CD8-positive, alpha-beta T cell (primary cell): ENCODE measurements at regions of chr3 and their contacts with region 1.

Region 1: GRCh38 chr3:42804106-42804830 is at the start of gene HIGD1A:
- DNase-seq: peak; percentile 82 to 97 (median 92)
- ATAC-seq: peak; percentile 98
- H3K4me3 ChIP-seq: peak within 1 kb of the TSS; percentile 84 to 90
- H3K4me3 Mint-ChIP-seq: peak within 1 kb of the TSS; percentile 98
- H3K27ac ChIP-seq: peak within 1 kb of the TSS; percentile 68 to 87
- H3K27ac Mint-ChIP-seq: peak within 1 kb of the TSS; percentile 91
- H3K4me1 ChIP-seq: peaks cover 26% of the 10 kb centered on the region
- H3K4me1 Mint-ChIP-seq: peaks cover 49% of the 10 kb centered on the region
- H3K27me3 ChIP-seq: no peaks in the 10 kb centered on the region
- H3K27me3 Mint-ChIP-seq: peaks cover 4% of the 10 kb centered on the region
- CTCF ChIP-seq: no peak
- total RNA-seq, gene HIGD1A: 10.9 to 11.8 TPM

Region 2: DNA sequence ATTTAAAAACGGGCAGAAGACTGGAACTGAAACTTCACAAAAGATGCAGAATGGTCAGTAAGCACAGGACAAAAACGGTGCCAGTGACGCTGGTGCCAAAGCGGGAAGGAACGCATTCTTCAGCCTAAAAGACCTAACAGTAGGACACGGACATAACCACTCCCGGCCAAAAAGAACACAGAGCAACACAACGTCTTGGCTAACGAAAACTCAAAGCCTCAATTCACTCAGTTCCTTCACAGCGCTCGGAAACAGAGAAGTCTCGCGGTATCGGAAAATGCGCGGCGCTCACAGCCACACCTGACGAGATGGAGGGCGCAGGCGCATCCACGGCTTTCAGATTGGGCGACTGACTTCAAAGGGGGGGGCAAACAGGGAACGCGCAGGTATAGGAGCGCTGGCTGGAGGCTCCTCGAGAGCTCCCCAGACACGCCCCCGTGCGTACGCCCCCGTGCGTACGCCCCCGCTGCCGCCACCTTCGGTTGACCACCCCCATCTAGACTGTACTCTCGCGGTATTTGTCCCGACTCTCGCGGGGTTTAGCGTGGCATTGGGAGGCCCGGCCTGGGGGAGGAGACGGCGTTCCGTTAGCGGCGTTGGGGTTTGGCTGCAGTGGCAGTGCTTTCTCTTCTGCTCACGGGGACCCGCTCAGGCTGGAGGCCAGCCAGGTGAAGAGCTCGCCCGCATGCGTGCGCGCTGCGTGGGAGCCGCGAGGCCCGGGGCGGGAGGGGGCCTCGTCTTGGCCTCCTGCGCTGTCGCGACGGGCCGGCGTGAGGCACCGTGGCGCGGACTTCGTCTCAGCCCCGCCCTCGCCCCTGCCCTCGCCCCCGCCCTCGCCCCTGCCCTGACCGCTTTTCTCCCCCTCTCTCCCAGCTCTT is 203.9 kb before region 1 on chr3 and contains the start of gene NKTR:
- CTCF ChIA-PET with region 1: no interaction called
- POLR2A ChIA-PET with region 1: no interaction called
- intact Hi-C with region 1: loop called in 1 of 2 experiments (anchors 5 kb)
- DNase-seq: peak; percentile 99 to 100 (median 100)
- ATAC-seq: peak; percentile 94
- H3K4me3 ChIP-seq: peak within 1 kb of the TSS; percentile 56 to 96
- H3K4me3 Mint-ChIP-seq: peak within 1 kb of the TSS; percentile 93
- H3K27ac ChIP-seq: peak within 1 kb of the TSS; percentile 69 to 81
- H3K27ac Mint-ChIP-seq: peak within 1 kb of the TSS; percentile 97
- H3K4me1 ChIP-seq: peaks cover 22% of the 10 kb centered on the region
- H3K4me1 Mint-ChIP-seq: peaks cover 39% of the 10 kb centered on the region
- H3K27me3 ChIP-seq: no peaks in the 10 kb centered on the region
- H3K27me3 Mint-ChIP-seq: no peaks in the 10 kb centered on the region
- CTCF ChIP-seq: no peak
- total RNA-seq, gene NKTR: 190 to 204 TPM

Region 3: GRCh38 chr3:42732829-42733459 is 71.3 kb before region 1 on chr3:
- CTCF ChIA-PET with region 1: no interaction called
- POLR2A ChIA-PET with region 1: no interaction called
- intact Hi-C with region 1: no loop called
- DNase-seq: peak in 1 of 9 experiments; percentile 31
- ATAC-seq: no peak
- H3K4me3 ChIP-seq: no peak overlapping the region
- H3K4me3 Mint-ChIP-seq: no peak overlapping the region
- H3K27ac ChIP-seq: no peak overlapping the region
- H3K27ac Mint-ChIP-seq: no peak overlapping the region
- H3K4me1 ChIP-seq: no peaks in the 10 kb centered on the region
- H3K4me1 Mint-ChIP-seq: no peaks in the 10 kb centered on the region
- H3K27me3 ChIP-seq: no peaks in the 10 kb centered on the region
- H3K27me3 Mint-ChIP-seq: no peaks in the 10 kb centered on the region
- CTCF ChIP-seq: no peak

Region 4: DNA sequence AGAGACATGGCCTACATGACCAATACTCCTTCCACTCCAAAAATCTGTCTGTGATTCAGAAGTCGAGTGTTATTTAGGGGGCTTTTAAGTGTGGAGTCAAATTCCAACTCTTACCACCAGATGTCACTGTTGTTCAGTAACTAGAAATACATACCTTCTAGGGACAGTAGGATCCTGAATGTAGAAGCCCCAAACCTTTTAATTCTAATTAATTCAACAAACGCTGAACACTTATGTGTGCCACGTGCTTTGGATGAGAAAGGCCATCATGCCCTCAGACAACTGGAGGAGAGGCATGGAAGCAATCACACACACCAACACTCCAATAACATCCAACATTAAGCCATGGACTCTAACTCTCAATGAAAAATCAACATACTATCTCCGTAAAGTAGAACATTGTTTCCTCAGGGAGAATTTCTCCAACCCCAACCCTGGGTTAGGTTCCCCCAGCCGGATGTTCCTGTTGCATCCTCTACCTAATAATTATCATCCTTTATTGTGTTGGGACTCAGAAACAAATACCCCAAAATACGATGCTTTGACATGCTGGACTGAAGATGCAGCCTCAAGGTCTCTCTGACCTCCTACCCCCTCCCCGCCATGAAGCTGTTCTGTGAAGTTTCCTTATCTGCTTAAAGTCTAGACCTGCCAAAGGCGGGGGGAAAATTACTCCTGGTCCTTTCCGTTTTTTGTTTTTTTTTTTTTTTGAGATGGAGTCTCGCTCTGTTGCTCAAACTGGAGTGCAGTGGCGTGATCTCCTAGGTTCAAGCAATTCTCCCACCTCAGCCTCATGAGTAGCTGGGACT is 23.2 kb before region 1 on chr3:
- CTCF ChIA-PET with region 1: interaction called, 4 read pairs
- POLR2A ChIA-PET with region 1: no interaction called
- intact Hi-C with region 1: loop called in 1 of 2 experiments (anchors 1 kb)
- DNase-seq: peak in 3 of 9 experiments; percentile 55 to 84 (median 80)
- ATAC-seq: peak; percentile 92
- H3K4me3 ChIP-seq: no peak overlapping the region
- H3K4me3 Mint-ChIP-seq: no peak overlapping the region
- H3K27ac ChIP-seq: no peak overlapping the region
- H3K27ac Mint-ChIP-seq: no peak overlapping the region
- H3K4me1 ChIP-seq: no peaks in the 10 kb centered on the region
- H3K4me1 Mint-ChIP-seq: peaks cover 2% of the 10 kb centered on the region
- H3K27me3 ChIP-seq: no peaks in the 10 kb centered on the region
- H3K27me3 Mint-ChIP-seq: no peaks in the 10 kb centered on the region
- CTCF ChIP-seq: peak; percentile 80

Region 5: DNA sequence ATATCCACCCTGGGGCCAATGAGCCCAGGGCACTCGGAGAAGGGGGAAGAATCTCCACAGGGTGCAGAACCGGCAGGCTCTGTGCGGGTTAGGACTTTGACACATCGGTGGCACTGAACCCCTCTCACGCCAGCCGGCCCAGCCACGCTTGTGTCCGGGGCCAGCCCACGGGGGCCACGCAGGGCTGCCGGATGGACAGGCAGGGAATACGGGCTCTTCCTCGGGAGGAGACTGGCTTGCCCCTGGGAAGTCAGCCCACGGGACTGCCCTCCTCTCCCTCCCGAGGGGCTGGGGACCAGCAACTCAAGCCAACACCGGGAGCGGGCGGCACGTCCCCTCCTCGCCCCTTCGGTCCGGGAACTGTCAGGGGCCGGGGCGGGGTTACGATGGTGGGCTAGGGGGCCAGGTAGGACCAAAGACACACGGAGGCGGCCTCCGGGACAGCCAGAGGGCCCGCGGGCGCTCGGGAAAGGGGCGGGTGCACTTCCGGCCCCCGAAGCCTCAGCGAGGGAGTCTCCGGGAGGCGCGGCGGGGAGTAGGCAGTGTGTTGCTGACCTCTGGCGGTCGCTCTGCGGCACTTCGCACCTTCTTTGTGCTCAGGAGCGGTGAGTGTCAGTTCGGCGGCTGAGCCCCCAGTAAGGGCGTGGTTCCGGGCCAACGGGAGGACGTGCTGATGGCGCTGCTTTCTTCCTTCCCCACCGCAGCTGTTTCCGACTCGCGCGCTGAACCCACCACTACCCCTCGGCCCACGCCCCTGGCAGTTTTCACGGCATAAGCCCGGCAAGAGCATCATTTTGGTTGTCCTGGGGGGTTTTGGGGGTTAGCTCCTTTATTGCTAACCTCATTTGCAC is 76.6 kb after region 1 on chr3:
- CTCF ChIA-PET with region 1: interaction called, 3 read pairs
- POLR2A ChIA-PET with region 1: no interaction called
- intact Hi-C with region 1: loop called in 1 of 2 experiments (anchors 1 kb)
- DNase-seq: peak; percentile 65 to 95 (median 86)
- ATAC-seq: peak; percentile 99
- H3K4me3 ChIP-seq: peak overlapping the region; percentile 75 to 77
- H3K4me3 Mint-ChIP-seq: peak overlapping the region; percentile 84
- H3K27ac ChIP-seq: peak overlapping the region; percentile 37 to 59
- H3K27ac Mint-ChIP-seq: peak overlapping the region; percentile 86
- H3K4me1 ChIP-seq: peaks cover 15% of the 10 kb centered on the region
- H3K4me1 Mint-ChIP-seq: peaks cover 11% of the 10 kb centered on the region
- H3K27me3 ChIP-seq: no peaks in the 10 kb centered on the region
- H3K27me3 Mint-ChIP-seq: no peaks in the 10 kb centered on the region
- CTCF ChIP-seq: peak; percentile 86

Region 6: DNA sequence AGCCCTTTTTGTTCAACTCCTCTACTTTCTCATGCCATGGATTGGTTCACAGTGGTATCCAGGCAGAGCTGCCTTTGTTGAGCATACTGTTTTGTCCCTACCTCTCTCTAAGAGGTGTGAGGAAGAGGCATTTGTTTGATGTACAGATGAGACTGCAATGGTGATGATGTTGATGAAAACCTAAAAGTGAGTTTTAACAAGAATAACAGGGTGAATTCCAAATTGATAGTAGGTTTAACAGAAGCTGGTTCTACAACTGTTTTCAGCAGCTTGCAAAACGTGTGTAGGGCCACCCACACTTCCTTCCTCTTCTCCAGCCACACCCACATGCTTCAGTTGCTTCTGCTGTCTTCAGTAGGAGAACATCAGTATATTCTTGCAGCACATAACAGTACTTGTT is 492.3 kb after region 1 on chr3:
- CTCF ChIA-PET with region 1: no interaction called
- POLR2A ChIA-PET with region 1: no interaction called
- intact Hi-C with region 1: loop called in 1 of 2 experiments (anchors 10 kb)
- DNase-seq: peak; percentile 22 to 92 (median 68)
- ATAC-seq: peak; percentile 88
- H3K4me3 ChIP-seq: peak overlapping the region; percentile 30 to 45
- H3K4me3 Mint-ChIP-seq: peak overlapping the region; percentile 87
- H3K27ac ChIP-seq: peak overlapping the region; percentile 57 to 87
- H3K27ac Mint-ChIP-seq: peak overlapping the region; percentile 96
- H3K4me1 ChIP-seq: peaks cover 89% of the 10 kb centered on the region
- H3K4me1 Mint-ChIP-seq: peaks cover 85% of the 10 kb centered on the region
- H3K27me3 ChIP-seq: no peaks in the 10 kb centered on the region
- H3K27me3 Mint-ChIP-seq: no peaks in the 10 kb centered on the region
- CTCF ChIP-seq: no peak

Region 7: DNA sequence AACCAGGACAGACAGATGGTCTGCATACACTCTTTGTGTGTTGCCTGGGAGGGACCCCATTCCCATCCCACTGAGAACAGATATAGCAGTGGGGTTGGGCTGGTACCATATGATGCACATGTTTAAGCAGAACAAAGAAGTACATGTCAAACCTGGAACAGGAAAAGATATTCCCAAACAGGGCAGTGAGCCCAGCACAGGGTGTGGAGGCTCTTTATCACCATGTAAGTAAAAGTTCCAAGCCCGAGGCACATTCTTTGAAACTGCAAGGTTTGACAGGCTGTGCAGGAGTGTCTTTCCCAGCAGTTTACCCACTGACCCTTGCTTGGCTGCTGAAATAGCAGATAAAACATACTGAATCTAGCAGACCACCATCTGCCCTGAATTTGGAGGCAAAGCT is 1678.5 kb after region 1 on chr3:
- CTCF ChIA-PET with region 1: no interaction called
- POLR2A ChIA-PET with region 1: no interaction called
- intact Hi-C with region 1: no loop called
- DNase-seq: no peak
- ATAC-seq: no peak
- H3K4me3 ChIP-seq: no peak overlapping the region
- H3K4me3 Mint-ChIP-seq: no peak overlapping the region
- H3K27ac ChIP-seq: no peak overlapping the region
- H3K27ac Mint-ChIP-seq: no peak overlapping the region
- H3K4me1 ChIP-seq: peaks cover 5% of the 10 kb centered on the region
- H3K4me1 Mint-ChIP-seq: peaks cover 5% of the 10 kb centered on the region
- H3K27me3 ChIP-seq: no peaks in the 10 kb centered on the region
- H3K27me3 Mint-ChIP-seq: no peaks in the 10 kb centered on the region
- CTCF ChIP-seq: no peak